ENCODE measurements at regions of chr6 and their contacts with region 1.

Region 1: GRCh38 chr6:119181046-119181445 is 102.6 kb upstream of the FAM184A start:
- DNase-seq: no peak
- ATAC-seq: no peak
- H3K4me3 ChIP-seq: no peak overlapping the region
- H3K27ac ChIP-seq: no peak overlapping the region
- H3K4me1 ChIP-seq: no peaks in the 10 kb centered on the region
- H3K27me3 ChIP-seq: no peaks in the 10 kb centered on the region
- CTCF ChIP-seq: no peak
- POLR2A ChIP-seq: no peak
- RAD21 ChIP-seq: no peak

Region 2: GRCh38 chr6:119119989-119120388 is 61.1 kb before region 1 on chr6:
- CTCF ChIA-PET with region 1: no interaction called
- POLR2A ChIA-PET with region 1: no interaction called
- dilution Hi-C with region 1: no loop called
- in situ Hi-C with region 1: no loop called
- intact Hi-C with region 1: no loop called
- DNase-seq: peak; percentile 74
- ATAC-seq: no peak
- H3K4me3 ChIP-seq: no peak overlapping the region
- H3K27ac ChIP-seq: no peak overlapping the region
- H3K4me1 ChIP-seq: no peaks in the 10 kb centered on the region
- H3K27me3 ChIP-seq: no peaks in the 10 kb centered on the region; the same call in 1 of the 2 replicates
- CTCF ChIP-seq: no peak
- POLR2A ChIP-seq: no peak
- RAD21 ChIP-seq: no peak

Region 3: DNA sequence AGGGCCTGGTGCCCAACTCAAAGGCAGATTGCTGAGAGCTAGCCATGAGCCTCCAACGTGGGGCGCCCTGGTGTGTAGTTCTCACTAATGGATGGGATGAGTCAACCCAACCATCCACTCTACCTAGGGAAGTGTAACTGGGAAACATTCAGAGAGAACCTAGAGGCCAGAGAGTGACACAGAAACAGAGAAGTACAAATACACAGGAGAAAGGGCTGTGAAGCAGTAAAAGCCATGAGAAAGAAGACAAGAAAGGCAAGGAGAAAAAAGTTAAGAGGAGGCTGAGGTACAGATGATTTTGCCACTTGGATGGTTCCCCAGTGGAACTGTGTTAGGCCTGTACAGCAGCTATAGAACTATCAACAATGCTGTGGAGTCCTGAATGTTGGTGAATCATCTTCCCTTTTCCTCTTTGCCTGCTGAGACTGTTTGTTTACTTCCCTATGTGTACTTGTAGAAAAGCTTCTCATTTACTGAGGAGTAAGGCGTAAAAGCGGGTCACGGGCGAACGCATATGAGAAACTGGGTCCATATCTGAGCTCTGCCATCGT is 129.5 kb after region 1 on chr6:
- CTCF ChIA-PET with region 1: no interaction called
- POLR2A ChIA-PET with region 1: no interaction called
- dilution Hi-C with region 1: no loop called
- in situ Hi-C with region 1: no loop called
- intact Hi-C with region 1: loop called (anchors 1 kb)
- DNase-seq: peak; percentile 54
- ATAC-seq: peak; percentile 72
- H3K4me3 ChIP-seq: no peak overlapping the region
- H3K27ac ChIP-seq: peak overlapping the region; percentile 43; the same call in 1 of the 2 replicates
- H3K4me1 ChIP-seq: peaks cover 4% of the 10 kb centered on the region
- H3K27me3 ChIP-seq: no peaks in the 10 kb centered on the region
- CTCF ChIP-seq: no peak
- POLR2A ChIP-seq: no peak
- RAD21 ChIP-seq: no peak

Measured in IMR-90 (cell line).